IMR-90 (cell line): ENCODE measurements at regions of chr16 and their contacts with region 1.

Region 1: DNA sequence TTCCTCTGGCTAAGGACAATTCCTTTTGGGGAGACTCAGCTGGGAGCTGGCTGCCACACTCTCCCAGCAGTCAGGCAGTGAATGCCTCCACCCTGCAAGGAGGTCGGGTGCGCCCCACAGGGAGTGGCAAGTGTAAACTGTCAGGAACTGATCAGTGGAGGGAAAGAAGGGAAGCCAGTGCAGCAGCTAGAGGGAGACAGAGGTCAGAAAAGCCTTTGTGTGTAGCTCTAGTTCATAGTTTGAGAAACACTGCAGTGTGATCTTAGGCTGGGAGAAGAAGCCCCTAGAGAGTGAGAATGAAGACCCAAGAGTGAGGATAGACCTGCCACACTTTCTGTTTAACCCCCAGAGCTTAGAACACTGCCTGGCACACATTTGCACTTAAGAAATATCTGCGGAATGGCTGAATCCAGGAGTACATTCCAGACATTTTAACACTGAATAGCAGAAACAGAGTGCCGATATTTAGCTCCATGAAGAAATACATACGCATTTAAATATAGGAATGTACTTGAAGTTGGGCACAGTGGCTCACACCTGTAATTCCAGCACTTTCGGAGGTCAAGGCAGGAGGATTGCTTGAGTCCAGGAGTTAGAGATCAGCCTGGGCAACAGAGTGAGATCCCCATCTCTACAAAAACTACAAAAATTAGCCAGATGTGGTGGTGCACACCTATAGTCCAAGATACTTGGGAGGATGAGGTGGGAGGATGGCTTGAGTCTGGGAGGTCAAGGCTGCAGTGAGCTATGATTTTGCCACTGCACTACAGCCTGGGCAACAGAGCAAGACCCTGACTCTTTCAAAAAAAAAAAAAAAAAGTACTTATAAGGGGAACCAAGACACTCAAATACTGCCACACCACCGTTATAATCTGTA is 11.1 kb upstream of the SLC5A11 start:
- DNase-seq: peak; percentile 49
- ATAC-seq: peak; percentile 79
- H3K4me3 ChIP-seq: no peak overlapping the region
- H3K27ac ChIP-seq: no peak overlapping the region
- H3K4me1 ChIP-seq: peaks cover 5% of the 10 kb centered on the region
- H3K27me3 ChIP-seq: no peaks in the 10 kb centered on the region
- CTCF ChIP-seq: peak; percentile 72
- POLR2A ChIP-seq: no peak
- RAD21 ChIP-seq: peak; percentile 75

Region 2: DNA sequence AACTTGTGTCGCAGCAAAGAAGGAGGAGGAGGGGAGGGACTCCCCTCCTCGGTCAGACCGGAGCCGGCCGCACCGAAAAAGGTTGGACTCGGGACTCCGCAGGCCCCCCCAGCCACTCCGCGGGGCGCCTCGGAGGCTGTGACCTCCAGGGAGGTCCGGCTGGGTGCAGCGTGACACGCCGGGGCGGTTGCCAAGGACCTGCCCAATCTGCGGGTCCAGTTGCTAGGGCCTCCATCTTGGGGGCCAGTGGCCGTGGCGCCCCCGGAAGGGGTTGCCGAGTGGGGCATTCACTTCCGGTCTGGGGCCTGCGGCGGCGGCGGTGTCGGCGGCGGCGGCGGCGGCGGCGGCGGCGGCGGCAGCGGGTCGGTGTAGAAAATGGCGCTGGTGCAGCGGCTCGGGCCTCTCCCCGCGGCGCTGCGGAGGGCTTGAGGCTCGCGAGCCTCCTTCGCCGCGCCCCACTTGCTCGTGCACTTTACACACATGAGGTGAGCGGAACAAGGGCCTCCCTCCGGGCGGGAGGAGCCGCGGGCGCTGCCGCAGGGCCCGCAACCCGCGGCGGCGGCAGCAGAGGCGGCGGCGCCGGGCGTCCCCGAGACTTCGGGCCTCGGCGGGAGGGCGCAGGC is 105.2 kb before region 1 on chr16 and contains the start of gene TNRC6A:
- CTCF ChIA-PET with region 1: no interaction called
- POLR2A ChIA-PET with region 1: no interaction called
- dilution Hi-C with region 1: no loop called
- in situ Hi-C with region 1: no loop called
- intact Hi-C with region 1: no loop called
- DNase-seq: peak; percentile 86
- ATAC-seq: peak; percentile 90
- H3K4me3 ChIP-seq: peak within 1 kb of the TSS; percentile 96
- H3K27ac ChIP-seq: peak within 1 kb of the TSS; percentile 97
- H3K4me1 ChIP-seq: peaks cover 10% of the 10 kb centered on the region
- H3K27me3 ChIP-seq: no peaks in the 10 kb centered on the region
- CTCF ChIP-seq: no peak
- POLR2A ChIP-seq: peak; percentile 74
- RAD21 ChIP-seq: no peak; the same call in 1 of the 2 replicates
- total RNA-seq, gene TNRC6A: 32.4 and 36.9 TPM in 2 replicates

Region 3: DNA sequence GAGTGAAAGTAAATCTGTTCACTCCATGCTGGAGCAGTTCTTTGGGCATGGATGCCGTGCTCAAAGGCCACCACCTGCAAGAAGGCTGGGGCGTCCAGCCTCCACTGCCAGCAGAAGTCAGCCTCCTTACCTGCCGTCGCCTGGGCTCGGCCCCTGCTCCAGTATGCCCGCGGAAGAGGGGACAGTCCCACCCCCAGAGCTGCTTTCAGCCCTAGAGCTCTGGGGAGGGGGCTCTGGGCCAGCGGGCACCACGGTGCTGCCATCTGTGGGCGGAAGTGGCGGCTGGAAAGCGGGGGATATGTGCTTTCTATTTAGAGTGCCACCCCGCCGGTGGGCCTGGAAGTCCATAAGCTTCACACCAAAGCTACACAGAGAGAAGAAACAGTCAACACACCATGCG is 104.5 kb after region 1 on chr16:
- CTCF ChIA-PET with region 1: no interaction called
- POLR2A ChIA-PET with region 1: no interaction called
- dilution Hi-C with region 1: no loop called
- in situ Hi-C with region 1: no loop called
- intact Hi-C with region 1: loop called (anchors 5 kb)
- DNase-seq: no peak
- ATAC-seq: no peak
- H3K4me3 ChIP-seq: no peak overlapping the region
- H3K27ac ChIP-seq: peak overlapping the region; percentile 57; the same call in 1 of the 2 replicates
- H3K4me1 ChIP-seq: no peaks in the 10 kb centered on the region
- H3K27me3 ChIP-seq: no peaks in the 10 kb centered on the region
- CTCF ChIP-seq: no peak
- POLR2A ChIP-seq: no peak
- RAD21 ChIP-seq: no peak

Region 4: DNA sequence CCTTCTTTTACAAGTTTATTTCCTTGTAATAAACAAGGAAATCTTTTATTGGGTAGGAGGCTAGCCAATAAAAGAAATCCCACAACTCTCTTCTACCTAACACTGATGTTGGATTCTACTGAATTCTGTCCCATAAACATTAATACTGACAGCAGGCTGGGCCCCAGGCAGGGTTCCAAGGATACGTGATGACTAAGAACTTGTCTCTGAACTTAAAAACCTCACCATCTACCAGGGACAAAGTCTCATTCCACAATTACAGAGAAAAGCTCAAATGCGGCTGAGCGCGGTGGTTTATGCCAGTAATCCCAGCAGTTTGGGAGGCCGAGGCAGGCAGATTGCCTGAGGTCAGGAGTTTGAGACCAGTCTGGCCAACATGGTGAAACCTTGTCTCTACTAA is 115.6 kb after region 1 on chr16:
- CTCF ChIA-PET with region 1: no interaction called
- POLR2A ChIA-PET with region 1: no interaction called
- dilution Hi-C with region 1: no loop called
- in situ Hi-C with region 1: no loop called
- intact Hi-C with region 1: no loop called
- DNase-seq: peak; percentile 84
- ATAC-seq: peak; percentile 80
- H3K4me3 ChIP-seq: no peak overlapping the region
- H3K27ac ChIP-seq: no peak overlapping the region
- H3K4me1 ChIP-seq: no peaks in the 10 kb centered on the region
- H3K27me3 ChIP-seq: no peaks in the 10 kb centered on the region
- CTCF ChIP-seq: no peak
- POLR2A ChIP-seq: no peak
- RAD21 ChIP-seq: no peak; the same call in 1 of the 2 replicates

Region 5: DNA sequence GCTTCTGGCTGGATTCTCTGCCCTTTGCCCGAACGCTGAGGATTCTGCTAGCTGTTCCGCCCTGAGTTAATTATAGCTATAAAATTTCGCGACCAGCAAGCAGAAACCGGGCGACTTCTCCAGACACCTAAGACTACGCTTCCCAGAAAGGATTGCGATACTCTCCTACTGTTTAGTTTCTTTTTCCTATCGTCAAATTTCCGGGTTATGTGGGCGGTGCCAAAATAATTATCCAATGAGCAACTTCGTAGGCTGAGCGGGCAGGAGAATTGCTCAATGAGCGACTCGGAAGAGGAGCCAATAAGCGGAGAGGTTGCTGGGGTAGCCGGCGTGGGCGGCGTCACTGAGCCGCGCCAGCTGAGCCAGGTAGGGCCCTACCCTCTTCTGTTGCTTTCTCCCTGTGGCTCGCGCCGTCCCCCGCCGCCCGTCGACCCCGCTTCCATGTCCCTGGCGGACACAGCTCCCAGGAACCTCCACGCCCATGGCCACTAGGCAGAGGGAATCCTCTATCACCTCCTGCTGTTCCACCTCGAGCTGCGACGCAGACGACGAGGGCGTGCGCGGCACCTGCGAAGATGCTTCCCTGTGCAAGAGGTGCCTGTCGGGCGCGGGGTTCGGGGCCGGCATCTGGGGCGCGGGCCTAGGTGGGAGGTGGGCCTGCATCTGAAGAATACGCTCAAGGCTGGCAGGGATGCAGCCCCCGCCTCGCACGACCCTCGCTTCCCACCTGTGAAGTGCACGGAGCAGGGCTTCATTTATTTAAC is 276.9 kb after region 1 on chr16 and contains the start of gene LCMT1:
- CTCF ChIA-PET with region 1: no interaction called
- POLR2A ChIA-PET with region 1: no interaction called
- dilution Hi-C with region 1: no loop called
- in situ Hi-C with region 1: no loop called
- intact Hi-C with region 1: loop called (anchors 10 kb)
- DNase-seq: peak; percentile 97
- ATAC-seq: peak; percentile 77
- H3K4me3 ChIP-seq: peak within 1 kb of the TSS; percentile 84
- H3K27ac ChIP-seq: peak within 1 kb of the TSS; percentile 78
- H3K4me1 ChIP-seq: peaks cover 3% of the 10 kb centered on the region
- H3K27me3 ChIP-seq: no peaks in the 10 kb centered on the region
- CTCF ChIP-seq: 0 out of 2 replicates have a peak, but pooled peaks have one; percentile 4
- POLR2A ChIP-seq: peak; percentile 63; the same call in 1 of the 2 replicates
- RAD21 ChIP-seq: no peak
- total RNA-seq, gene LCMT1: 60.0 and 60.4 TPM in 2 replicates

Region 6: DNA sequence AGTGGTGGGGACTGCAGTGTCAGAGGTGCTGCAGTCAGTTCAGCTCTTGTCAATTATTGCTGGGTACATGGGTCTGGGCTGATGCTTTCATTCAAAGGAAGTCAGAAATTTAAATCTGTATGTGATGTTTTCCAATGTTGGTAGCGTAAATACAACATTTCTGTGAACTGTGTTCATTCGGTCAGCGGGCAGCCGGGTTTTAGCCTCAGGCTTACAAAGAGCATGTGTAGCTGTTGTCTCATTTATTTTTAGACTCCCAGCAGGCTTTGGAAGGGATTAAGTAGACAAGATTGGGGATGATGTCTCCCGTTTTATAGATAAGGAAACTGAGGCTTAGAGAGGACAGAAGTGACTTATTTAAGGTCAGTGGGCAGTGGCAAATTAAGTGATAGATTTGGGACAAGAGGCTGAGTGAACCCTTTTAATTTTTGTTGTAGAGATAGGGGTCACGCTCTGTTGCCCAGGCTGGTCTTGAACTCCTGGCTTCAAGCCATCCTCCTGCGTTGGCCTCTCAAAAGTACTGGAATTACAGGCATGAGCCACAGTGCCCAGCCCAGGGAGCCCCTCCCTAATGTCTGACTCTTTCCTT is 390.1 kb after region 1 on chr16:
- CTCF ChIA-PET with region 1: interaction called, 4 read pairs
- POLR2A ChIA-PET with region 1: no interaction called
- dilution Hi-C with region 1: no loop called
- in situ Hi-C with region 1: no loop called
- intact Hi-C with region 1: loop called (anchors 10 kb)
- DNase-seq: no peak
- ATAC-seq: no peak
- H3K4me3 ChIP-seq: no peak overlapping the region
- H3K27ac ChIP-seq: no peak overlapping the region
- H3K4me1 ChIP-seq: no peaks in the 10 kb centered on the region
- H3K27me3 ChIP-seq: peaks cover 3% of the 10 kb centered on the region; the same call in 1 of the 2 replicates
- CTCF ChIP-seq: no peak
- POLR2A ChIP-seq: no peak
- RAD21 ChIP-seq: no peak